ENCODE measurements at regions of chrX and their contacts with region 1.

Region 1: GRCh38 chrX:74133156-74133796 is 170.7 kb upstream of the ZCCHC13 start:
- DNase-seq: peak; percentile 6
- ATAC-seq: peak; percentile 49
- H3K4me3 Mint-ChIP-seq: no peak overlapping the region
- H3K27ac Mint-ChIP-seq: no peak overlapping the region
- H3K4me1 Mint-ChIP-seq: no peaks in the 10 kb centered on the region
- H3K27me3 Mint-ChIP-seq: no peaks in the 10 kb centered on the region

Region 2: GRCh38 chrX:73728602-73729001 is 404.7 kb before region 1 on chrX:
- CTCF ChIA-PET with region 1: no interaction called
- POLR2A ChIA-PET with region 1: no interaction called
- intact Hi-C with region 1: no loop called
- DNase-seq: no peak
- ATAC-seq: no peak
- H3K4me3 Mint-ChIP-seq: no peak overlapping the region
- H3K27ac Mint-ChIP-seq: no peak overlapping the region
- H3K4me1 Mint-ChIP-seq: no peaks in the 10 kb centered on the region
- H3K27me3 Mint-ChIP-seq: no peaks in the 10 kb centered on the region

Region 3: GRCh38 chrX:73855546-73855945 is 277.7 kb before region 1 on chrX:
- CTCF ChIA-PET with region 1: interaction called, 10 read pairs
- POLR2A ChIA-PET with region 1: no interaction called
- intact Hi-C with region 1: loop called (anchors 1 kb)
- DNase-seq: peak; percentile 67
- ATAC-seq: peak; percentile 61
- H3K4me3 Mint-ChIP-seq: no peak overlapping the region
- H3K27ac Mint-ChIP-seq: no peak overlapping the region
- H3K4me1 Mint-ChIP-seq: no peaks in the 10 kb centered on the region
- H3K27me3 Mint-ChIP-seq: no peaks in the 10 kb centered on the region

Measured in activated CD4-positive, alpha-beta T cell treated with anti-CD3 and anti-CD28 coated beads for 36 hours (primary cell).